Psoas muscle (tissue), 8 donors: ENCODE measurements at regions of chr3 and their contacts with region 1.

Region 1: GRCh38 chr3:99753268-99753975 is 64.2 kb upstream of the CMSS1 start:
- DNase-seq: no peak
- ATAC-seq: peak; percentile 54 to 68 (median 58)
- H3K4me3 ChIP-seq: no peak overlapping the region
- H3K27ac ChIP-seq: no peak overlapping the region
- H3K4me1 ChIP-seq: peaks cover 10% of the 10 kb centered on the region
- H3K27me3 ChIP-seq: no peaks in the 10 kb centered on the region
- CTCF ChIP-seq: peak; percentile 79

Region 2: DNA sequence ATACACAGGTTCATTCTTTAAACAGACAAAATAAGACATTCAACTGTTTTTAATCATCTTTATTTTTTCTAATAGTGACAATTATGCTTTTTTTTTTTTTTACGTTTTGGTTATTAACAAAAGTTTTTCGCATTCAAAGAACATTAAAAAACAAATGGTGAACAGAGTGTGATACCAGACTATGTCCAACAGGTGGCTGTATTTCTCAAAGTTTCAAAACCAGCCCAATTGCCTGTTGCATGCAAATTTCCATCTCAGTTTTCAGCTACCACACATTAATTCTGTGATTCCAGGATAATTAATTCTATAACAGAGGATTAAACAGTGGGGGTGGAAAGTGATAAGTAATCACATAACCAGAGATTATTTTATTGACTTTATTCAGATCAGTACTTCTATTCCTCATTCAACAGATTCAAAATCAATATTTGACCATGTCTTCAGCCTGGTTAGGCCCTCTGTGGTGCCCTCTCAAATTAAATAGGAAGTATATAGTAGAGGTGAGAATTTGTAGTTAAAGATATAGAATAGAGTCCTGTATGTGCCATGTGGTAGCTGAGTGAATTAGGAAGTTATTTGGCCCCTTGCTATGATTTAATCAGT is 729.7 kb before region 1 on chr3:
- intact Hi-C with region 1: loop called in 1 of 2 experiments (anchors 5 kb)
- DNase-seq: no peak
- ATAC-seq: no peak
- H3K4me3 ChIP-seq: no peak overlapping the region
- H3K27ac ChIP-seq: no peak overlapping the region
- H3K4me1 ChIP-seq: no peaks in the 10 kb centered on the region
- H3K27me3 ChIP-seq: no peaks in the 10 kb centered on the region
- CTCF ChIP-seq: peak; percentile 58

Region 3: DNA sequence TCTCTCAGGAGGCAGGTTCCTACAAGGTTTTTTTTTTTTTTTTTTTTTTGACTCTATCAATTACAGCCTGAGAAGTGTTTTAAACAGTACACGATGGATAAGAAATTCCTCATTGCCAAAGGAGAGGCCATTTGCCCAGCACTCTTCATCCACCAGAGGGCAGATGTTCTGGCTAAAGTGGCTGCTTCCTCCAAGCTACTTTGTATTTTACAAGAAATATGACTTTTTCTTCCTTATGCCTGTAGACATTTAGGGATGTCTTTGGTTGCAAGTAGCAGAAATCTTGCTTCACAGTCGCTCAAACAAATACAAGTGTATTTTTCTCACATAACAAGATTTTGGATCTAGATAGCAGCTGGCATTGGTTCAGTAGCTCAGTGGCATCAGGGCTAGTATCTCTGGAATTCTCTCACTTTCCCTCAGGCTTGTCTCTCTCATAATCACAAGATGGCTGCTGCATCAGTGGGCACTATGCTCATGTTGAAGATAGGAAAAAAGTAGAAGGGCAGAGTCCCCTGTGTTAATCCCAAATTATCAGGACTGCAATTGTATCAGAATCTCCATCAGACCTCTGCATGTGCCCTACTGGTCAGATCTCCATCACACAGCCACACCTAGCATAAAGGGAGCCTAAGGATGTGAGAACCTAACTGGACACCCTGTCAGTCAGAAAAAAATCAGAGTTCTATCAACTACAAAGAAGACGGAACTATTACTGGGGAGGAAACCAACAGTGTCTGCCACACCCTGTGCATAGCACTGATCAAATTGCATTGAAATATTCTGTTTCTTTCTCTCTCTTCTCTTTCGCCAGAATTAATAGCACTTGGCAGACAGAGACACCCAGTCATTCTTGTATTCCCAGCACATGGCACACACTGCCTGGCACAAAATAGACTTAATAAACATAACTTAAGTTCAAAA is 253.9 kb before region 1 on chr3:
- intact Hi-C with region 1: loop called (anchors 2 to 10 kb)
- DNase-seq: no peak
- ATAC-seq: peak in 3 of 4 donors; percentile 46 to 65 (median 47)
- H3K4me3 ChIP-seq: no peak overlapping the region
- H3K27ac ChIP-seq: no peak overlapping the region
- H3K4me1 ChIP-seq: no peaks in the 10 kb centered on the region
- H3K27me3 ChIP-seq: no peaks in the 10 kb centered on the region
- CTCF ChIP-seq: peak; percentile 66

Region 4: GRCh38 chr3:99579246-99579645 is 174.2 kb before region 1 on chr3:
- intact Hi-C with region 1: no loop called
- DNase-seq: no peak
- ATAC-seq: no peak
- H3K4me3 ChIP-seq: no peak overlapping the region
- H3K27ac ChIP-seq: no peak overlapping the region
- H3K4me1 ChIP-seq: no peaks in the 10 kb centered on the region
- H3K27me3 ChIP-seq: peaks cover 0 to 2% (median 0%) of the 10 kb centered on the region in 3 donors
- CTCF ChIP-seq: no peak

Region 5: DNA sequence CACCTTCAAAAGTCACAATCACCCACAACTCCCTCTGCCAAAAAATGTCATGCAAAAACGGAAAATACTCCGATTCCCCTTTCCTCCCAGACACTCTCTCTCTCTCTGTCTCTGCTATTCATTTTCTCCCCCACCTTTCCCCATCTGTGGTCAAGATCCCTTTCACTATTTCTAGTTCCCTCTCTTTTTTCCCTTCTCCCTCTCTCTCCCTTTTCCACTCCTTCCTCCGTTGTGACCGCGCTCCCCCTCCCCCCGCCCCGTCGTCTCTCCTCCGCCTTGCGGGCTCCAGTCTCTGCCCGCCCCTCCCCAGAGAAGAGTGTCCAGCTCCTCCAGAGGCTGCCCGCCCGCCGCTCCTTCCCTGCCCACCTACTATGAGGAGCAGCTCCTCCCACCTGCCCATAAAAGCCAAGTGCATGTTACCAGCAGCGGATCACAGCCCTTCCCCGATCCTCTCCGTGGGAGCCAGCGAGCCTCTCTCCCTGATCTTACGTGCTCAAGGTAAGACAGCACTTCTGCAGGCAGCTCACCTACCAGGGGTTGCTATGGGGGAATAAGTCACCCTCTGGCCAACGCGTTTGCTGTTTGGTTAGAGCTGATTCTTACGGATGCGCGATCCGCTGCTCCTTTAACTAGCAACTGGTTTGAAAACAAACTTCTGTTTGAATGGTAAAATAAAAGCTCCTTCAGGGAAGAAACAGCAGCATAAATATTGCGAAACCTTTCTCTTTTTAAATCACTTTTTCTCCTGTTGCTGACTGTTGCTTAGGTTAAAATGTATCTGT is 115.1 kb before region 1 on chr3 and contains the start of gene COL8A1:
- intact Hi-C with region 1: loop called in 1 of 2 experiments (anchors 5 kb)
- DNase-seq: peak; percentile 52 to 74
- ATAC-seq: peak; percentile 30 to 68 (median 40)
- H3K4me3 ChIP-seq: peak within 1 kb of the TSS; percentile 58
- H3K27ac ChIP-seq: peak within 1 kb of the TSS; percentile 47
- H3K4me1 ChIP-seq: no peaks in the 10 kb centered on the region
- H3K27me3 ChIP-seq: peaks cover 0 to 34% (median 13%) of the 10 kb centered on the region in 3 donors
- CTCF ChIP-seq: no peak
- total RNA-seq, gene COL8A1: 1.2 to 11.3 (median 4.9) TPM